ENCODE measurements at regions of chr2 and their contacts with region 1.

Region 1: GRCh38 chr2:189661148-189661956 is at the start of gene ASNSD1:
- DNase-seq: peak; percentile 98 to 99
- H3K4me3 ChIP-seq: peak within 1 kb of the TSS; percentile 70 to 91
- H3K27ac ChIP-seq: peak within 1 kb of the TSS; percentile 91
- H3K4me1 ChIP-seq: peaks cover 25% of the 10 kb centered on the region
- H3K27me3 ChIP-seq: no peaks in the 10 kb centered on the region
- CTCF ChIP-seq: peak; percentile 87 to 99 (median 96)
- POLR2A ChIP-seq: peak in 1 of 2 donors; percentile 79
- total RNA-seq, gene ASNSD1: 44.7 TPM

Region 2: GRCh38 chr2:188835821-188836220 is 825.5 kb before region 1 on chr2:
- intact Hi-C with region 1: no loop called
- DNase-seq: no peak
- H3K4me3 ChIP-seq: no peak overlapping the region
- H3K27ac ChIP-seq: peak overlapping the region; percentile 25
- H3K4me1 ChIP-seq: peaks cover 8% of the 10 kb centered on the region
- H3K27me3 ChIP-seq: no peaks in the 10 kb centered on the region
- CTCF ChIP-seq: no peak
- POLR2A ChIP-seq: no peak

Region 3: GRCh38 chr2:189698020-189698887 is 36.9 kb after region 1 on chr2:
- intact Hi-C with region 1: loop called (anchors 5 kb)
- DNase-seq: no peak
- H3K4me3 ChIP-seq: no peak overlapping the region
- H3K27ac ChIP-seq: no peak overlapping the region
- H3K4me1 ChIP-seq: no peaks in the 10 kb centered on the region
- H3K27me3 ChIP-seq: no peaks in the 10 kb centered on the region
- CTCF ChIP-seq: peak; percentile 19 to 52 (median 37)
- POLR2A ChIP-seq: no peak

Region 4: GRCh38 chr2:189783927-189784867 is 122.8 kb after region 1 on chr2 and contains the starts of genes ORMDL1 and PMS1:
- intact Hi-C with region 1: no loop called
- DNase-seq: peak in 1 of 2 donors; percentile 95
- H3K4me3 ChIP-seq: peak within 1 kb of the TSS; percentile 60 to 84
- H3K27ac ChIP-seq: peak within 1 kb of the TSS; percentile 91
- H3K4me1 ChIP-seq: peaks cover 51% of the 10 kb centered on the region
- H3K27me3 ChIP-seq: no peaks in the 10 kb centered on the region
- CTCF ChIP-seq: no peak
- POLR2A ChIP-seq: peak in 1 of 2 donors; percentile 81
- total RNA-seq, gene ORMDL1: 58.9 TPM
- total RNA-seq, gene PMS1: 20.1 TPM

Measured in vagina (tissue), 2 donors.